A549 (cell line): ENCODE measurements at regions of chr11 and their contacts with region 1.

Region 1: DNA sequence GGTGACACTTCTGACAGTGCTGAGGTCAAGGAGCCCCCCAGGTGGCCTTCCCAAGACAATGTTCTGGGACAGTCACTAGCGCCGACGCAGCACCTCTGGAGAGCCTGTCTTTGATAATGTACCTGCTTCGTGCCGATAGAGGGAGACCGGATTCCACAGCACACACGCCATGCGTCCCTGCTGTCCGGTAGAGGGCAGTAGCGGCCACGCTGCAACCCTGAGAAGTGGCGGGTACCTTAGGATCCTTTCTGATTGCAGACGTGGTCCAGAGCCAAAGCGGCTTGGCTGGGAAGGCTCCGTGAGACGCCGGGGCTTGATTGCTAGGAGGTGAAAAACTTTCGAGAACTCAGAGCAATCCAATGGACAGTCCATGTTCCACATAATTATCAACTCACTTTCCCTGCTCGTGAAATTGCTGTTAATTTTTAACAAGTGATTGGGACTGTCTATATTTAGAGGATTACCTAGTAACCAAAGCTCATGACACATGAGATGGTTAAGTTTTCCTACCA is 11.4 kb upstream of the BARX2 start:
- DNase-seq: peak; percentile 29 to 88
- ATAC-seq: peak; percentile 100
- H3K4me3 ChIP-seq: 0 out of 3 replicates have a peak overlapping the region, but pooled peaks have one; percentile 25
- H3K27ac ChIP-seq: no peak overlapping the region
- H3K4me1 ChIP-seq: no peaks in the 10 kb centered on the region
- CTCF ChIP-seq: peak; percentile 98
- EP300 ChIP-seq: no peak
- POLR2A ChIP-seq: no peak
- RAD21 ChIP-seq: peak; percentile 91 to 96

Region 2: GRCh38 chr11:129750349-129751292 is 386.4 kb after region 1 on chr11:
- CTCF ChIA-PET with region 1: interaction called, 54 read pairs
- POLR2A ChIA-PET with region 1: no interaction called
- DNase-seq: peak; percentile 12 to 79
- ATAC-seq: peak; percentile 95 to 98
- H3K4me3 ChIP-seq: peak overlapping the region; percentile 27; the same call in 1 of the 3 replicates
- H3K27ac ChIP-seq: peak overlapping the region; percentile 17 to 68; a peak in 2 of 6 replicates
- H3K4me1 ChIP-seq: no peaks in the 10 kb centered on the region
- CTCF ChIP-seq: peak; percentile 100
- EP300 ChIP-seq: no peak
- POLR2A ChIP-seq: no peak
- RAD21 ChIP-seq: peak; percentile 94 to 96